ENCODE measurements at regions of chr4 and their contacts with region 1.

Region 1: GRCh38 chr4:183183906-183184535 is 85.0 kb downstream of the WWC2 start:
- DNase-seq: no peak
- ATAC-seq: no peak
- H3K4me3 ChIP-seq: no peak overlapping the region
- H3K4me3 Mint-ChIP-seq: no peak overlapping the region
- H3K27ac ChIP-seq: no peak overlapping the region
- H3K27ac Mint-ChIP-seq: no peak overlapping the region
- H3K4me1 ChIP-seq: no peaks in the 10 kb centered on the region
- H3K4me1 Mint-ChIP-seq: peaks cover 16 to 28% (median 19%) of the 10 kb centered on the region in 3 donors
- H3K27me3 ChIP-seq: peaks cover 0 to 4% of the 10 kb centered on the region in 2 experiments
- H3K27me3 Mint-ChIP-seq: peaks cover 6 to 12% of the 10 kb centered on the region in 2 donors

Region 2: DNA sequence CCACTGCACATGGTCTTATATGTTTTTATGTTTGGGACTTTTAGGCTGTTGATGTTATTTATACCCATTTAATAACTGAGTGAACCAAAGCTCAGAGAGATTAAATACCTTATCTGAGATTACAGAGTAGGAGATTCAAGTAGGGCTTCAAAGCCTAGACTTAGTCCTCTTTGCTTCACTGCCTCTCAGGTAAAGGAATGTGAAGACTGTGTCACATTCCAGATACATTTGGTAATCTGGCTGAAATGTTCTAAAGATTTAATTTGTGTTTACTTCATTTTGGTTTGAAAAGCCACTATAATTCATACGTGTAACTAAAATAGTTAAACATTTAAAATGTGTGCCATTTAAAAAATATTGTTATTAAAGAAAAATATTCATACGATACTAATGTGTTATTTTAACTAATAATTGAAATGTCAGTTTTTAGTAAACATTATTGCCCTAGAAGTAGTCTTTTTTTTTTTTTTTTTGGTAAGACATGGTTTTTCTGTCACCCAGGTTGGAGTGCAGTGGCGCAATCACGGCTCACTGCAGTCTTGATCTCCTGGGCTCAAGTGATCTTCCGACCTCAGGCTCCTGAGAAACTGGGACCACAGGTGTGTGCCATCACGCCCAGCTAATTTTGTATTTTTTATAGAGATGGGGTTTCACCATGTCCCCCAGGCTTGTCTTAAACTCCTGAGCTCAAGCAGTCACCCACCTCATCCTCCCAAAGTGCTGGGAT is 30.7 kb before region 1 on chr4:
- CTCF ChIA-PET with region 1: no interaction called
- POLR2A ChIA-PET with region 1: interaction called in 1 of 2 experiments, 16 read pairs
- DNase-seq: no peak
- ATAC-seq: no peak
- H3K4me3 ChIP-seq: no peak overlapping the region
- H3K4me3 Mint-ChIP-seq: no peak overlapping the region
- H3K27ac ChIP-seq: no peak overlapping the region
- H3K27ac Mint-ChIP-seq: no peak overlapping the region
- H3K4me1 ChIP-seq: no peaks in the 10 kb centered on the region
- H3K4me1 Mint-ChIP-seq: peaks cover 0 to 5% (median 5%) of the 10 kb centered on the region in 3 donors
- H3K27me3 ChIP-seq: no peaks in the 10 kb centered on the region
- H3K27me3 Mint-ChIP-seq: no peaks in the 10 kb centered on the region

Region 3: DNA sequence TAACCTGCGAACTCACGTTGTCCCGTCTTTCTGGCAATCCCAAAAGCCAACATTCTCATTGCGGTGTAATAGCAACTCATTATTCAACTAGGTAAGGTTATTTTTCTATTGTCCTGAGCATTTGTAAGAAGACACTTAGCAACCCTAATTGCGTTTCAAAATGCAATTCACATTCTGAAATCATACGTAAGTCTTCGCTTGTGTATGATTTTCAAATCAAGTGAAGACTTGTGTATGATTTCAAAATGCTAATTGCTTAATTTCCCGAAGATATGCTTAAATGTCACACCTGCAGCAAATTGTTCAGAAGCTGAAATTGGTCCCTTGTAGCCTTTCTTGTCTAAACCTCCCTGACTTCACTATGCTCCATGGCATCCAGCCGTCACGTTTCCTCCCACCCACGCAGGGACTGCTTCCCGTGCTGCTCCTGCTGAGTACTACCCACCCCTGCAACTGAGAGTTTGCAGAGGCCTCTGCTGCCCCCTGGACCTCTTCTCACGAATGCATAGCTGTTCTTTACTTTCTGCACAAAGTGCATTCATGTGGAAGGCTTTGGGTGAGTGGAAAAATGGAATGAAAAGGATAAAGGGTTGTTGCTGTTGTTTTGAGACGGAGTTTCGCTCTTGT is 179.0 kb after region 1 on chr4:
- CTCF ChIA-PET with region 1: no interaction called
- POLR2A ChIA-PET with region 1: no interaction called
- DNase-seq: no peak
- ATAC-seq: no peak
- H3K4me3 ChIP-seq: no peak overlapping the region
- H3K4me3 Mint-ChIP-seq: no peak overlapping the region
- H3K27ac ChIP-seq: no peak overlapping the region
- H3K27ac Mint-ChIP-seq: no peak overlapping the region
- H3K4me1 ChIP-seq: no peaks in the 10 kb centered on the region
- H3K4me1 Mint-ChIP-seq: no peaks in the 10 kb centered on the region
- H3K27me3 ChIP-seq: no peaks in the 10 kb centered on the region
- H3K27me3 Mint-ChIP-seq: peaks cover 0 to 2% of the 10 kb centered on the region in 2 donors